Naive thymus-derived CD4-positive, alpha-beta T cell (primary cell): ENCODE measurements at regions of chr1 and their contacts with region 1.

Region 1: DNA sequence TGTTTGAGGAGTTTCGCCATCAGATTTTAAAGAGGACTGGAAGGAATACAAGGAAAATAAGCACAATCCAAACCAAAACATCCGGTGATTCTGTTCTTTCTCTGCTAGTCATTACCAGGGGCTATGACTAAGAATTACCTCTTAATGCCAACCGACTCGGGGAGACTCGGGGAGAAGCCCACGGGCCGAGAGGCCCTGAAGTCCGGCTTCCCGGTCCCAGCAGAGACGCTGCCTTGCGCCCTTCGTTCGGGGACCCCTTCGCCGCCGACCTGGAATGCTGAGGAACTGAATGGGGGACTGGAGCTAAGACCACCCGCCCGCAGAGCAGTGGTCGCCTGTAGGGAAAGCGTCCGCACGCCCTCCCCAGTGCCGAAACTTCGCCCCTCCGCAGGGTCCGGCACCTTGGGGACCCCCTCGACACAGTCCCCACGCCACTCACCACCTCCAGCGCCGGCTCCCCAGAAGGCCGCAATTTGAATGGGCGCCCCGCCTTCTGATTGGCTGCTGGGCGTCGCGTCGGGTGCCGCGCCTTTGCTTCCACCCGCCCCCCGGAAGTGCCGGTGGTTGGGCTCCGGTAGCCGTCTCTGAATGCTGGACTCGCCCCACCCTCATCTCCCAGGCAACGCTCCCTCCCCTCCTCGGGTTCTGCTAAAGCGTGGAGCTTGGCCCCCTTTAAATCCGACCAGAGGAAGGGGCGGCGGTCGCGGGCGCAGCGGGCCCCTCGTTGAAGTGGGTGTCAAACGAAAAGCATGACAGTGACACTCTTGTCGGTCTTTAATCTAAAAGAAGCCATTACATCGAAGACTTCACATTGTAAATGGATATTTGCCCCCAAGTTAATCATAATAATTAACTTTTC is at the start of gene KIF14:
- DNase-seq: peak; percentile 81 to 94 (median 89)
- ATAC-seq: peak; percentile 99
- H3K4me3 ChIP-seq: peak within 1 kb of the TSS; percentile 58
- H3K4me3 Mint-ChIP-seq: peak within 1 kb of the TSS; percentile 86 to 99 (median 96)
- H3K27ac ChIP-seq: peak within 1 kb of the TSS; percentile 67
- H3K27ac Mint-ChIP-seq: peak within 1 kb of the TSS; percentile 74 to 96 (median 93)
- H3K4me1 ChIP-seq: peaks cover 6% of the 10 kb centered on the region in 2 donors
- H3K4me1 Mint-ChIP-seq: peaks cover 0 to 56% (median 15%) of the 10 kb centered on the region in 7 donors
- H3K27me3 ChIP-seq: peaks cover 0 to 4% of the 10 kb centered on the region in 2 donors
- H3K27me3 Mint-ChIP-seq: no peaks in the 10 kb centered on the region
- total RNA-seq, gene KIF14: 0.16 to 16.2 (median 0.42) TPM in 3 of 5 experiments, not detected in the others

Region 2: GRCh38 chr1:200530623-200531261 is 89.8 kb before region 1 on chr1:
- CTCF ChIA-PET with region 1: interaction called, 3 read pairs
- POLR2A ChIA-PET with region 1: interaction called, 5 read pairs
- intact Hi-C with region 1: loop called in 1 of 2 experiments (anchors 5 kb)
- DNase-seq: peak; percentile 22 to 87 (median 79)
- ATAC-seq: peak; percentile 97
- H3K4me3 ChIP-seq: peak overlapping the region; percentile 29
- H3K4me3 Mint-ChIP-seq: peak overlapping the region; percentile 41 to 86 (median 78)
- H3K27ac ChIP-seq: peak overlapping the region; percentile 62
- H3K27ac Mint-ChIP-seq: peak overlapping the region; percentile 71 to 92 (median 86)
- H3K4me1 ChIP-seq: peaks cover 16 to 34% of the 10 kb centered on the region in 2 donors
- H3K4me1 Mint-ChIP-seq: peaks cover 16 to 61% (median 53%) of the 10 kb centered on the region in 7 donors
- H3K27me3 ChIP-seq: no peaks in the 10 kb centered on the region
- H3K27me3 Mint-ChIP-seq: no peaks in the 10 kb centered on the region

Region 3: DNA sequence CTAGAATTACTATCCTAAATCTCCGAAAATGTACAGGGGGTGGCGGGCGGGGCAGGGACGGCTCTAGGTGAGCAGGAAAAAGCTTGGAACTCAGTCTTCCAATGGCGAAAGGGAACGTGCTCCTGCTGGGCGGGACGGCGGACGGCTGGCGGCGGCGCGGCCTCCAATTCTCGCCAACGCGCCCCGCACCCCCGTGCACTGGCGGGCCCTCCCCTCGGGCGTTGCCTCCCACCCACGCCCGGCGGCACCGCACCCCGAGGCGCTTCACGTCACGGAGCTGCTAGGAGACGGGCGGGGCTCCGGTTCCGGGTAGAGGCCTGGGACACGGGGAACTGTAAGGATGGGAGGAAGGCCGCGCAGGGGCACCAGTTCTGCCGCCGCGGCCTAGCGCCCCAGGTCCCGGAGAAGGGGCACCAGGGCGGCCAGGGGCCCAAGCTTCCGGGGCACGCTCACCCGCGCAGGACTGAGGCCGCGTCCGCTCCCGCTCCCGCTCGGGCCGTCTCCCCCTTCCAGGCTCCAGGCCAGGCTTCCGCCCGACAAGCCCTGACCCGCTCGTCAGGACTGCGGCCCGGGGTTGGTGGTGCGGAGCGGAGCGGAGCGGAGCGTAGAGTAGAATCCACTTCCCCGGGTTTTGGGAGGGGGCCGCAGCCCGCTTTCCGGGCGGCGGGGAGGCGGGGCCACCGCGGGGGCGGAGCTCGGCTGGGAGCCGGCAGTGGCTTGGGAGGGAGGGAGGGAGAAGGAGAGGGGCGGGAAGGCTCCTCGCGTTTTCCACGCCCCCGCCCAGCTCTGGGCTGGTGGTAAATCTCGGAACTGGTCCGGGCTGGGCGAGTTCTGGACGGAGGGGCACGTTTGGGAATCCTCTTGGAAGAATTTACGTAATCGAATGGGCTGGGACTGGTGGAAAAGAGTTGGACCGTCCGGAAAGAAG is 49.1 kb after region 1 on chr1 and contains the start of gene DDX59:
- CTCF ChIA-PET with region 1: interaction called, 7 read pairs
- POLR2A ChIA-PET with region 1: interaction called, 9 read pairs
- intact Hi-C with region 1: loop called (anchors 1 kb)
- DNase-seq: peak; percentile 81 to 95 (median 85)
- ATAC-seq: peak; percentile 92
- H3K4me3 ChIP-seq: peak within 1 kb of the TSS; percentile 93
- H3K4me3 Mint-ChIP-seq: peak within 1 kb of the TSS; percentile 96 to 99 (median 98)
- H3K27ac ChIP-seq: peak within 1 kb of the TSS; percentile 98
- H3K27ac Mint-ChIP-seq: peak within 1 kb of the TSS; percentile 89 to 99 (median 97)
- H3K4me1 ChIP-seq: peaks cover 13 to 16% of the 10 kb centered on the region in 2 donors
- H3K4me1 Mint-ChIP-seq: peaks cover 20 to 60% (median 51%) of the 10 kb centered on the region in 7 donors
- H3K27me3 ChIP-seq: no peaks in the 10 kb centered on the region
- H3K27me3 Mint-ChIP-seq: no peaks in the 10 kb centered on the region
- total RNA-seq, gene DDX59: 20.6 to 41.3 (median 31.1) TPM

Region 4: GRCh38 chr1:200738740-200739498 is 118.4 kb after region 1 on chr1 and contains the start of gene CAMSAP2:
- CTCF ChIA-PET with region 1: interaction called, 3 read pairs
- POLR2A ChIA-PET with region 1: interaction called, 3 read pairs
- intact Hi-C with region 1: loop called (anchors 1 to 2 kb)
- DNase-seq: peak; percentile 43 to 76 (median 69)
- ATAC-seq: peak; percentile 80
- H3K4me3 ChIP-seq: peak within 1 kb of the TSS; percentile 74
- H3K4me3 Mint-ChIP-seq: peak within 1 kb of the TSS; percentile 85 to 99 (median 98)
- H3K27ac ChIP-seq: peak within 1 kb of the TSS; percentile 75
- H3K27ac Mint-ChIP-seq: peak within 1 kb of the TSS; percentile 78 to 97 (median 93)
- H3K4me1 ChIP-seq: peaks cover 5 to 23% of the 10 kb centered on the region in 2 donors
- H3K4me1 Mint-ChIP-seq: peaks cover 16 to 49% (median 41%) of the 10 kb centered on the region in 7 donors
- H3K27me3 ChIP-seq: no peaks in the 10 kb centered on the region
- H3K27me3 Mint-ChIP-seq: peaks cover 0 to 45% (median 0%) of the 10 kb centered on the region in 5 donors
- total RNA-seq, gene CAMSAP2: 0.36 to 11.4 (median 5.5) TPM

Region 5: DNA sequence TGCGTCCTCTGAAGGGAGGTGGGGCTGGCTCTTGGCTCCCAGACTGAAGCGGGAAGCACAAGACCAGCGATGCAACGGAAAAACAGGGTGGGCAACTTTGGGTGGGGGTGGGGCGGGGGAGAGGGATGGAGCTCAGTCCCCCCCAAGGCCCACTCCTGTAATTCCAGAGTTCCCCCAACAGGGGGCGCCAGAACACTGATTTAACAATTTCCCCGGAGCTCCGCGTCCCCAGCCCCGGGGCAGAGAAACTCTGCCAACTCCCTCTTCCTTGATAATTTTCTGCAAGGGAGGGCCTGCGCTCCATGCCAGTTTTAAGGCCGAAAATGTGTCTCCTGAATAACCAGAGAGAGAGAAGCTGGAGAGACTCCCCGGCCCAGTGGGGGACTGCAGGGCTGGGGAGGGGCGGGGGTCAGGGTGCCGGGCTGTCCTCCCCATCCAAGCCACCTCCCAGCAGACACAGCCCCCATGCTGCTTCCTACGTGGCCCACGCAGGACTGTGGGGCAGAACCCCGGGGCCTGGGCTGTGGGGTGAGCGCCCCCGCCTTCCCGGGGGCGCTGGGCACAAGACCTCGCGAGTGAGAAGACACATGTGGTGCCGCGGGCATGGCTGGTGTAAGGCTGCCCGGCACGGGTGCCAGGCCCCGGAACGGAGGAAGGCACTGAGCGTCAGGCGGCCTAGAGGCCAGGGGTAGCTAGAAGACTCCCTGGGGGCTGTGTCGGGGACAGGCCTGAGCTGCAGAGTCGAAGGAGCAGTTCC is 351.6 kb after region 1 on chr1:
- CTCF ChIA-PET with region 1: no interaction called
- POLR2A ChIA-PET with region 1: no interaction called
- intact Hi-C with region 1: loop called in 1 of 2 experiments (anchors 5 kb)
- DNase-seq: peak; percentile 48 to 73 (median 59)
- ATAC-seq: peak; percentile 71
- H3K4me3 ChIP-seq: no peak overlapping the region
- H3K4me3 Mint-ChIP-seq: no peak overlapping the region
- H3K27ac ChIP-seq: no peak overlapping the region
- H3K27ac Mint-ChIP-seq: peak overlapping the region in 2 of 9 donors; percentile 38 to 84
- H3K4me1 ChIP-seq: no peaks in the 10 kb centered on the region
- H3K4me1 Mint-ChIP-seq: peaks cover 0 to 6% (median 0%) of the 10 kb centered on the region in 7 donors
- H3K27me3 ChIP-seq: no peaks in the 10 kb centered on the region
- H3K27me3 Mint-ChIP-seq: no peaks in the 10 kb centered on the region